Sigmoid colon (tissue), 7 donors: ENCODE measurements at regions of chr11 and their contacts with region 1.

Region 1: GRCh38 chr11:108414958-108415357 is 52.4 kb downstream of the C11orf65 start:
- DNase-seq: no peak
- H3K4me3 ChIP-seq: no peak overlapping the region
- H3K27ac ChIP-seq: no peak overlapping the region
- H3K4me1 ChIP-seq: no peaks in the 10 kb centered on the region
- H3K27me3 ChIP-seq: no peaks in the 10 kb centered on the region
- CTCF ChIP-seq: no peak
- EP300 ChIP-seq: no peak
- POLR2A ChIP-seq: no peak

Region 2: GRCh38 chr11:107908306-107908705 is 506.7 kb before region 1 on chr11:
- intact Hi-C with region 1: no loop called
- DNase-seq: no peak
- H3K4me3 ChIP-seq: no peak overlapping the region
- H3K27ac ChIP-seq: no peak overlapping the region
- H3K4me1 ChIP-seq: no peaks in the 10 kb centered on the region
- H3K27me3 ChIP-seq: no peaks in the 10 kb centered on the region
- CTCF ChIP-seq: no peak
- EP300 ChIP-seq: no peak
- POLR2A ChIP-seq: no peak

Region 3: GRCh38 chr11:108432783-108433182 is 17.8 kb after region 1 on chr11:
- intact Hi-C with region 1: no loop called
- DNase-seq: no peak
- H3K4me3 ChIP-seq: no peak overlapping the region
- H3K27ac ChIP-seq: no peak overlapping the region
- H3K4me1 ChIP-seq: no peaks in the 10 kb centered on the region
- H3K27me3 ChIP-seq: no peaks in the 10 kb centered on the region
- CTCF ChIP-seq: no peak
- EP300 ChIP-seq: no peak
- POLR2A ChIP-seq: no peak

Region 4: DNA sequence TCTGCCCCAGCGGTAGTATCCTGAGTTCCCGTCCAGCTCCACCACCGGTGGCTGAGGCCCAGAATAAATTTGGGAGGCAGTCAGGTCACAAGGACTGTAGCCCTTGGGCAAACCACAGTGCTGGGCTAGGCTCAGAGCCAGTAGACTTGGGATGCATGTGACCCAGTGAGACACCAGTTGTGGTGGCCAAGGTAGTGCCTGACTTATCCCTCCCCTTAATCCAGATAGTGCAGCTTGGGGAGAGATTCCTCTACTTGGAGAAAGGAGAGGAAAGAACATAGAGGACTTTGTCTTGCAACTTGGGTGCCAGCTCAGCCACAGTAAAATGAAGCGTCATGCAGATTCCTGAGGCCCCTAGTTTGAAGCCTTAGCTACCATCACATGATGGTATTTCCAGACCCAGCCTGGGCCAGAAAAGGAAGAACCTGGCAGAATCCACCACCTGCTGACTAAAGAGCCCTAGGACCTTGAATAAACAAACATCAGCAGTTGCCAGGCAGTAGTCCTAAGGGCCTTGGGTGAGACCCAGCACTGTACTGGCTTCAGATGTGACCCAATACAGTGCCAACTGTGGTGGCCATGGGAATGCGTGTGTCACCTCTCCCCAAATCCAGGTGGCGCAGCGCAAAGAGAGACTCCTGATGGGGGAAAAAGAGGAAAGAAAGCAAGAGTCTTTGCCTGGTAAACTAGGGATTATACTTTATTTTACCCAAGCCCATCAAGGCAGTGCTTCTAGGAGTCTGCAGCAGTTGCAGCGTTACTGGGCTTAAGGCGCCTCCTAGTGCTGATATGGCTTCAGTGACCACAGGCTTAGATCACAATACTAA is 233.0 kb after region 1 on chr11:
- intact Hi-C with region 1: loop called (anchors 2 kb)
- DNase-seq: no peak
- H3K4me3 ChIP-seq: no peak overlapping the region
- H3K27ac ChIP-seq: no peak overlapping the region
- H3K4me1 ChIP-seq: no peaks in the 10 kb centered on the region
- H3K27me3 ChIP-seq: no peaks in the 10 kb centered on the region
- CTCF ChIP-seq: peak; percentile 39 to 64 (median 56)
- EP300 ChIP-seq: no peak
- POLR2A ChIP-seq: no peak

Region 5: GRCh38 chr11:108727665-108728064 is 312.7 kb after region 1 on chr11:
- intact Hi-C with region 1: no loop called
- DNase-seq: no peak
- H3K4me3 ChIP-seq: no peak overlapping the region
- H3K27ac ChIP-seq: no peak overlapping the region
- H3K4me1 ChIP-seq: peaks cover 0 to 11% (median 3%) of the 10 kb centered on the region in 4 donors
- H3K27me3 ChIP-seq: no peaks in the 10 kb centered on the region
- CTCF ChIP-seq: no peak
- EP300 ChIP-seq: no peak
- POLR2A ChIP-seq: no peak